SK-N-SH (cell line): ENCODE measurements at regions of chr3 and their contacts with region 1.

Region 1: DNA sequence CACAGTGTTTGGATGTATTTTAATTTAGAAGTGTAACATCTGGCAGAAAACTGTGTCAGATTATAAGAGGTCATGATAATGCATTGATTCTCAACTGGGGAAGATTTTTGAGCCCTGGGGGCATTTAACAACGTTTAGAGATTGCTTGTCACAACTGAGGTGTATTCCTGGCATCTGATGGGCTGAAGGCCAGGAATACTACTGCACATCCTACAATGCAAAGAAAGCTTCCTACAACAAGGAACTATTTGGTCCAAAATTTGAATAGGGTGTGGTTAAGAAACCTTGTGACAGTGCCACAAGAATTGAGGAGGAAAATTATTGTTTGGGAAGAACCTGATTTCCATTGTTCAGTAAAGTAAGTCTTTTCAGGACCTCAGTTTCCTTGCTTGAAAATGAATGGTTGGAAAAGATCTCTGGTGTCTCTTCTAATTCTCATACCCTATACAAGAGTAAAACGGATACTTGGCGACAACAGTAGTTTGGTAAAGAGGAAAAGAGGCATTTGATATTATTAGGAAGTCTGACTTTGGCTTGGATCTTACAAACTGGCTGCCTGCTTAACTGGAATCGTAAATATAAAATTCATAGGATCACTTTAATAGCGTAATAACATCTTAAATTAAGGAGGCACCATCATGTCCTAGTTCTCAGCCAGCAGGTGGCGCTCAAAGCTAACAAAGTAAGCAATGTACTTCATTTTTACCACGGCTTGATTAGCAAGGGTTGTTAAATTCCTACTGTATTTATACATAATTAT is 4.3 kb downstream of the DAZL start:
- DNase-seq: peak; percentile 67
- H3K4me3 ChIP-seq: no peak overlapping the region; a peak in 1 of 4 replicates
- H3K27ac ChIP-seq: no peak overlapping the region
- H3K4me1 ChIP-seq: no peaks in the 10 kb centered on the region; a peak in 1 of 4 replicates
- H3K27me3 ChIP-seq: no peaks in the 10 kb centered on the region
- CTCF ChIP-seq: peak; percentile 87
- EP300 ChIP-seq: no peak
- RAD21 ChIP-seq: peak; percentile 95

Region 2: GRCh38 chr3:16587047-16587680 is 13.8 kb before region 1 on chr3:
- CTCF ChIA-PET with region 1: interaction called, 19 read pairs
- POLR2A ChIA-PET with region 1: no interaction called
- DNase-seq: no peak
- H3K4me3 ChIP-seq: no peak overlapping the region
- H3K27ac ChIP-seq: peak overlapping the region in 1 of 2 experiments; percentile 27; a peak in 1 of 4 replicates
- H3K4me1 ChIP-seq: no peaks in the 10 kb centered on the region
- H3K27me3 ChIP-seq: no peaks in the 10 kb centered on the region
- CTCF ChIP-seq: peak; percentile 18
- EP300 ChIP-seq: no peak
- RAD21 ChIP-seq: no peak

Region 3: GRCh38 chr3:16632395-16632794 is 31.4 kb after region 1 on chr3:
- CTCF ChIA-PET with region 1: interaction called, 12 read pairs
- POLR2A ChIA-PET with region 1: no interaction called
- DNase-seq: no peak
- H3K4me3 ChIP-seq: no peak overlapping the region
- H3K27ac ChIP-seq: no peak overlapping the region
- H3K4me1 ChIP-seq: no peaks in the 10 kb centered on the region
- H3K27me3 ChIP-seq: no peaks in the 10 kb centered on the region
- CTCF ChIP-seq: no peak
- EP300 ChIP-seq: no peak
- RAD21 ChIP-seq: no peak

Region 4: DNA sequence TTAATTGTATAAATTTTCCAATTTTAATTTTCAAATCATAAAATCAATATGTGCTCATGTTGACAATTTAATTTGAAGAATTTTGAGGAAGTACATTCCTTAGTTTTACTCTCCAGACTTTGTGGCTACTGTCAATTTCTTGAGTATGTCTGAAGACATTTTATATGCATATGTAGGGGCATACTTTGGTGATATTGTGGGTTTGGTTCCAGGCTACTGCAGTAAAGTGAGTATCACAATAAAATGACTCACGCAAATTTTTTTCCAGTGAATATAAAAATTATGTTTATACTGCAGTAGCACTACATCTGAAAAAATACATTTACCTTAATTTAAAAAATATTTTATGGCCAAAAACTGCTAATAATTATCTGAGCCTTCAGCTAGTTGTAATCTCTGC is 160.6 kb after region 1 on chr3:
- CTCF ChIA-PET with region 1: no interaction called
- POLR2A ChIA-PET with region 1: no interaction called
- DNase-seq: no peak
- H3K4me3 ChIP-seq: no peak overlapping the region
- H3K27ac ChIP-seq: no peak overlapping the region
- H3K4me1 ChIP-seq: no peaks in the 10 kb centered on the region; a peak in 1 of 4 replicates
- H3K27me3 ChIP-seq: no peaks in the 10 kb centered on the region
- CTCF ChIP-seq: no peak
- EP300 ChIP-seq: 0 out of 4 replicates have a peak, but pooled peaks of 1 of the 2 experiments have one; percentile 7
- RAD21 ChIP-seq: no peak

Region 5: GRCh38 chr3:17025594-17026139 is 424.7 kb after region 1 on chr3:
- CTCF ChIA-PET with region 1: interaction called, 21 read pairs
- POLR2A ChIA-PET with region 1: no interaction called
- DNase-seq: no peak
- H3K4me3 ChIP-seq: no peak overlapping the region
- H3K27ac ChIP-seq: no peak overlapping the region
- H3K4me1 ChIP-seq: no peaks in the 10 kb centered on the region
- H3K27me3 ChIP-seq: no peaks in the 10 kb centered on the region
- CTCF ChIP-seq: no peak
- EP300 ChIP-seq: no peak
- RAD21 ChIP-seq: no peak

Region 6: GRCh38 chr3:17032407-17033034 is 431.6 kb after region 1 on chr3:
- CTCF ChIA-PET with region 1: interaction called, 21 read pairs
- POLR2A ChIA-PET with region 1: no interaction called
- DNase-seq: peak; percentile 39
- H3K4me3 ChIP-seq: no peak overlapping the region; a peak in 1 of 4 replicates
- H3K27ac ChIP-seq: no peak overlapping the region
- H3K4me1 ChIP-seq: no peaks in the 10 kb centered on the region
- H3K27me3 ChIP-seq: no peaks in the 10 kb centered on the region
- CTCF ChIP-seq: peak; percentile 68
- EP300 ChIP-seq: no peak
- RAD21 ChIP-seq: peak; percentile 91

Region 7: DNA sequence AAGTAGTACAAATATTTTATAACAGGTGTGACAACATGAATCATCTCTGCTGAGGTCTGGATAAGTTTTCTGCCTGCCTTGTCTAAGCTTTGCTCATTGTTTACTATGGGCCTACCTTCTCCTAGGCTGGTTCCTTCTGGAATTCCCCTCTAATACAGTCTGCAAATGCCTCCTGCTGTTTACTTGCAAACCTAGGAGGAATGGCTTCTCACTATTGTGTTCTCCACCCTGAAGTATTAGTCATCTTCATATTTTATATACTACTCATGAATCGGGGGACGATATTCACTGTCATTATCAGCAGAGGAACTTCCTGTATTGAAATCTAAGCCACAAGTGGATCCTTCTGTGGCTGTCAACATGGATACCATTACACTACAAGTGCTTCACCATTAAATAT is 438.6 kb after region 1 on chr3:
- CTCF ChIA-PET with region 1: interaction called, 11 read pairs
- POLR2A ChIA-PET with region 1: no interaction called
- DNase-seq: no peak
- H3K4me3 ChIP-seq: no peak overlapping the region
- H3K27ac ChIP-seq: peak overlapping the region; percentile 28 to 48; a peak in 3 of 4 replicates
- H3K4me1 ChIP-seq: peaks cover 4 to 7% of the 10 kb centered on the region in 2 experiments; a peak in 3 of 4 replicates
- H3K27me3 ChIP-seq: no peaks in the 10 kb centered on the region
- CTCF ChIP-seq: no peak
- EP300 ChIP-seq: peak in 1 of 2 experiments; percentile 63; a peak in 2 of 4 replicates
- RAD21 ChIP-seq: peak; percentile 11; the same call in 1 of the 2 replicates

Region 8: DNA sequence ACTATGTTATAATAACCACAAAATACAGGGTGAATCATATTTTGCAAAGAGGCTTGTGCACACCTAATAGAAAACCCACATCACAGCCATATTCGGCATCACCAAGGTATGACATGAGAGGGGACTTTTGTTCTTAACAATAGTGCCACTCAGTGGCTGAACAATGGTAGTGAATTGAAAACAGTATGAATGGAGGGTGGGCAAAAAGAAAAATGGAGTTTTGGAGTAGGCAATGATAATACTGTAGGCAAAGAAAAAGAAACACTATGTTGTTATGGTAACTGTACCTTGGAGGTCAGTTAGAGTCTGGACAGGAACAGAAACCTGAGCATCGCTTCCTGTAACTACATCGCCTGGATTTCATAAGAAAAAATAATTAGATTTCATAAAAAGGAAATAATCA is 632.4 kb after region 1 on chr3:
- CTCF ChIA-PET with region 1: interaction called, 36 read pairs
- POLR2A ChIA-PET with region 1: no interaction called
- DNase-seq: peak; percentile 45
- H3K4me3 ChIP-seq: no peak overlapping the region; a peak in 1 of 4 replicates
- H3K27ac ChIP-seq: no peak overlapping the region
- H3K4me1 ChIP-seq: no peaks in the 10 kb centered on the region; a peak in 1 of 4 replicates
- H3K27me3 ChIP-seq: no peaks in the 10 kb centered on the region
- CTCF ChIP-seq: peak; percentile 81
- EP300 ChIP-seq: no peak
- RAD21 ChIP-seq: peak; percentile 93